ENCODE measurements at regions of chr1 and their contacts with region 1.

Region 1: GRCh38 chr1:216447907-216448568 is 24.8 kb upstream of the USH2A start:
- DNase-seq: no peak
- H3K4me3 Mint-ChIP-seq: no peak overlapping the region
- H3K27ac Mint-ChIP-seq: no peak overlapping the region
- H3K4me1 Mint-ChIP-seq: peaks cover 6% of the 10 kb centered on the region
- H3K27me3 Mint-ChIP-seq: peaks cover 59% of the 10 kb centered on the region
- CTCF ChIP-seq: no peak

Region 2: DNA sequence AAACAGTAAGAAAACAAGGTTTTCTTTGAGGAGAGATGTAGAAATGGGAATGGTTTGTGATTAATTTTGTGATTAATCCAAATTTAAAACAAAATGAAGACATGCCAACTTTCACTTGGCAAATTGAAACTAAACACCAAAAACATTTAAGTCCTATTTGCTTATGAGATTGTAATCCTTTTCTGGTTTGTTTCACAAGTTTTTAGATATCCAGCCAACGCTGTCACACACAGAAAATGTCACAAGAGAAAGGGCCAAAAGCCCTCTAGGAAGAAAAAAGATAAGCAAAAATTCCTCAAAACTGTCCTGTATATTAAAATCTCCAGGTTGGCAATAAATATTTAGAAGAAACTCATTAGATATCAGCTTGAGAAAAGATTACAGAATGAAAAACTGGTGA is 27.3 kb before region 1 on chr1:
- CTCF ChIA-PET with region 1: no interaction called
- POLR2A ChIA-PET with region 1: interaction called, 3 read pairs
- intact Hi-C with region 1: loop called (anchors 2 kb)
- DNase-seq: no peak
- H3K4me3 Mint-ChIP-seq: no peak overlapping the region
- H3K27ac Mint-ChIP-seq: no peak overlapping the region
- H3K4me1 Mint-ChIP-seq: no peaks in the 10 kb centered on the region
- H3K27me3 Mint-ChIP-seq: peaks cover 100% of the 10 kb centered on the region
- CTCF ChIP-seq: no peak

Measured in MCF 10A (cell line).